Caco-2 (cell line): ENCODE measurements at regions of chr11 and their contacts with region 1.

Region 1: DNA sequence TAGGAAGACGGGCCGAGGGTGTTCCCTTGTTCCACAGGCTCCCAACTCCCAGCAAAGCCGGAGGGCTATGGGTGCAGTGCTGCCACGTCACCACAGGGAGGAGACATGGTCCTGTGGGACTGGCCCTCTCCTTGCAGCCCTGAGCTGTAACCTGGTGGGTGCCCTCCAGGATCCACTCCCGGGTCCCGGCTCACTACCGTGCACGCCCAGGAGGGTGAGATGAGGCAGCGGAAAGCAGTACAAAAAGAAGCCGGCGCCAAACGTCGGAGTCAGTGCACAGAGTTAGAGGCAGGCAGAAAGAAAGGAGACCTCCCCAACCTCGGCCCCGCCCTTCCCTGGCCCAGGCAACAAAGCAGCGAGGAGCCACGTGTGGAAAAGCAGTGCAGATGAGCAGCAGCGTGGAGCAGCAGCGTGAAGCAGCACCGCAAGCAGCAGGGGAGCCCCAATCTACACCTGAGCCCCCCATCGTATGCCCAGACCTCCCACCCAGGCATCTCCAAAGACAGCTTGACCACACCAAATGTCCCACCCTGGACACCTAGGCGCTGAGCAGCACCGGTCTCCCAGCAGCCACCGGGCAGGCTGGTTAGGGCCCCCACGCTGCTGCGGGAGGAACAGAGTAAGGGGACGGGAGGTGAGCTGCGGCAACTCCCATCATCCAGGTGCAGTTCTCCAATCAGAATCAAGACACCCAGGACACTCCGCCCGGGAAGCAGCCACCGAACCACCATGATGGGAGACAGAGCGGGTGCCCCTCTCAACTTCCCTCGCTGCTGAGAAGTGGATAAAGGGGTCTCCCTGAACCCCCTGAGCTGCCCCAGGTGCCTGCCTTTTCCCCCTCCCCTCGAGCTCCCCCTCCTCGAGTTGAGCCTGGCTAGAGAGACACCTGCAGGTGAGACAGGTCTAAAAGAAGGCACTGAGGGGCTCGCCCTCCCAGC is 28.8 kb downstream of the IGSF9B start:
- DNase-seq: peak; percentile 87 to 90
- H3K4me3 ChIP-seq: peak overlapping the region; percentile 34
- H3K4me3 Mint-ChIP-seq: peak overlapping the region; percentile 70
- H3K27ac Mint-ChIP-seq: no peak overlapping the region
- H3K4me1 ChIP-seq: no peaks in the 10 kb centered on the region
- H3K4me1 Mint-ChIP-seq: no peaks in the 10 kb centered on the region
- H3K27me3 ChIP-seq: no peaks in the 10 kb centered on the region
- H3K27me3 Mint-ChIP-seq: no peaks in the 10 kb centered on the region
- CTCF ChIP-seq: peak; percentile 97 to 98

Region 2: GRCh38 chr11:133821776-133822175 is 106.2 kb before region 1 on chr11:
- CTCF ChIA-PET with region 1: no interaction called
- POLR2A ChIA-PET with region 1: no interaction called
- intact Hi-C with region 1: no loop called
- DNase-seq: peak; percentile 63 to 72
- H3K4me3 ChIP-seq: no peak overlapping the region
- H3K4me3 Mint-ChIP-seq: no peak overlapping the region
- H3K27ac Mint-ChIP-seq: no peak overlapping the region
- H3K4me1 ChIP-seq: no peaks in the 10 kb centered on the region
- H3K4me1 Mint-ChIP-seq: no peaks in the 10 kb centered on the region
- H3K27me3 ChIP-seq: no peaks in the 10 kb centered on the region
- H3K27me3 Mint-ChIP-seq: peaks cover 17% of the 10 kb centered on the region
- CTCF ChIP-seq: peak; percentile 72 to 80

Region 3: GRCh38 chr11:133956650-133957633 is 29.0 kb after region 1 on chr11 and contains the start of gene IGSF9B:
- CTCF ChIA-PET with region 1: no interaction called
- POLR2A ChIA-PET with region 1: no interaction called
- intact Hi-C with region 1: no loop called
- DNase-seq: peak; percentile 83 to 94
- H3K4me3 ChIP-seq: peak within 1 kb of the TSS; percentile 39
- H3K4me3 Mint-ChIP-seq: peak within 1 kb of the TSS; percentile 74
- H3K27ac Mint-ChIP-seq: no peak within 1 kb of the TSS
- H3K4me1 ChIP-seq: 0 out of 2 replicates have a peak, but pooled peaks cover 6% of the 10 kb centered on the region
- H3K4me1 Mint-ChIP-seq: no peaks in the 10 kb centered on the region
- H3K27me3 ChIP-seq: peaks cover 5% of the 10 kb centered on the region
- H3K27me3 Mint-ChIP-seq: peaks cover 27% of the 10 kb centered on the region
- CTCF ChIP-seq: no peak
- total RNA-seq, gene IGSF9B: 4.2 and 4.3 TPM in 2 replicates

Region 4: DNA sequence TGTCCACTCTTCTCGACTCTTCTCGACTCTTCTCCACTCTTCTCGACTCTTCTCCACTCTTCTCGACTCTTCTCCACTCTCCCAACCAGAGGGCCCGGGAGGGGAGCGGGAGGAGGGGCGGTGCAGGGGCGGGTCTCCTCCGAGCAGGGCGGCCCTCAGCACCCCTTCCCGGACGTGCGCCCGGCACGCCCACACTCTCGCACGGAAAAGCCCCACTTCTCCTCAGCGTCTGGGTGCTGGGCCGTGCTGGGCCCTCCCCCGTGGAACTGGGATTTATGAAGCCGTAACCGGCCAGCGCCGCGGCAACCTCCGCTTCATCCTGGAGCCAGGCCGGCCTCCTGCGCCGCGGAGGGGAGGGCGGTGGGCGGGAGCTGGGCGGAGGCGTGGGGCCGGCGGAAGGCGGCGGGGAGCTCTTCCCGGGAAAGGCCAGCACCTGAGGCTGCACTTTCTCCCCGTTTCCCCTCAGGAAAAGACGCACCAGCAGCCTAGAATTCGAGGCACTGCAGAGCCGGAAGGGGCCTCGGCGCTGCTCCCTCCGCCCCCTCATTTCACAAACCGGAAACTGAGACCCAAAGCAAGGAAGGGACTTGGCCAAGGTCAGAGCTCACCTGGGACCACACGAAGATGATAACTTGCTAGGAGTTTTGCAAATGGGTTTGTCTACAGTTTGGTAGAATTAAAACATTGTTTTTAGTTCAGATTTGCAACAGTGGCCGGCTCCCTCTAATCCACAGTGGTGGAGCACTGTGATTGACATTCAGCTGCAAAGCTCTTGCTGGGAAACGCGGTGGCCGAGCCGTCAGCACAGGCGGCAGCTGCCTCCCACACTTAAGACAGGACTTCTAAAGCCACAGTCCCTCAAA is 109.3 kb after region 1 on chr11:
- CTCF ChIA-PET with region 1: interaction called, 11 read pairs
- POLR2A ChIA-PET with region 1: interaction called, 4 read pairs
- intact Hi-C with region 1: loop called (anchors 2 kb)
- DNase-seq: peak; percentile 69
- H3K4me3 ChIP-seq: peak overlapping the region; percentile 51
- H3K4me3 Mint-ChIP-seq: peak overlapping the region; percentile 73
- H3K27ac Mint-ChIP-seq: no peak overlapping the region
- H3K4me1 ChIP-seq: 0 out of 2 replicates have a peak, but pooled peaks cover 3% of the 10 kb centered on the region
- H3K4me1 Mint-ChIP-seq: no peaks in the 10 kb centered on the region
- H3K27me3 ChIP-seq: no peaks in the 10 kb centered on the region; the same call in 1 of the 2 replicates
- H3K27me3 Mint-ChIP-seq: peaks cover 7% of the 10 kb centered on the region
- CTCF ChIP-seq: no peak

Region 5: GRCh38 chr11:134050541-134051383 is 122.8 kb after region 1 on chr11:
- CTCF ChIA-PET with region 1: interaction called, 19 read pairs
- POLR2A ChIA-PET with region 1: no interaction called
- intact Hi-C with region 1: loop called (anchors 1 kb)
- DNase-seq: peak; percentile 69 to 86
- H3K4me3 ChIP-seq: 0 out of 2 replicates have a peak overlapping the region, but pooled peaks have one; percentile 11
- H3K4me3 Mint-ChIP-seq: peak overlapping the region; percentile 47
- H3K27ac Mint-ChIP-seq: no peak overlapping the region
- H3K4me1 ChIP-seq: peaks cover 4% of the 10 kb centered on the region; the same call in 1 of the 2 replicates
- H3K4me1 Mint-ChIP-seq: no peaks in the 10 kb centered on the region
- H3K27me3 ChIP-seq: no peaks in the 10 kb centered on the region; the same call in 1 of the 2 replicates
- H3K27me3 Mint-ChIP-seq: peaks cover 34% of the 10 kb centered on the region
- CTCF ChIP-seq: peak; percentile 98

Region 6: GRCh38 chr11:134098566-134099184 is 170.7 kb after region 1 on chr11:
- CTCF ChIA-PET with region 1: interaction called, 51 read pairs
- POLR2A ChIA-PET with region 1: no interaction called
- intact Hi-C with region 1: loop called (anchors 1 kb)
- DNase-seq: peak in 1 of 2 experiments; percentile 37
- H3K4me3 ChIP-seq: no peak overlapping the region
- H3K4me3 Mint-ChIP-seq: no peak overlapping the region
- H3K27ac Mint-ChIP-seq: no peak overlapping the region
- H3K4me1 ChIP-seq: no peaks in the 10 kb centered on the region; the same call in 1 of the 2 replicates
- H3K4me1 Mint-ChIP-seq: no peaks in the 10 kb centered on the region
- H3K27me3 ChIP-seq: 0 out of 2 replicates have a peak, but pooled peaks cover 1% of the 10 kb centered on the region
- H3K27me3 Mint-ChIP-seq: peaks cover 5% of the 10 kb centered on the region
- CTCF ChIP-seq: peak; percentile 58 to 88

Region 7: GRCh38 chr11:134139873-134140331 is 211.9 kb after region 1 on chr11:
- CTCF ChIA-PET with region 1: interaction called, 7 read pairs
- POLR2A ChIA-PET with region 1: no interaction called
- intact Hi-C with region 1: loop called (anchors 1 kb)
- DNase-seq: peak; percentile 70 to 73
- H3K4me3 ChIP-seq: no peak overlapping the region
- H3K4me3 Mint-ChIP-seq: no peak overlapping the region
- H3K27ac Mint-ChIP-seq: no peak overlapping the region
- H3K4me1 ChIP-seq: no peaks in the 10 kb centered on the region
- H3K4me1 Mint-ChIP-seq: no peaks in the 10 kb centered on the region
- H3K27me3 ChIP-seq: no peaks in the 10 kb centered on the region
- H3K27me3 Mint-ChIP-seq: peaks cover 33% of the 10 kb centered on the region
- CTCF ChIP-seq: peak; percentile 88 to 93